Activated T-helper 1 cell treated with anti-CD3 and anti-CD28 coated beads, Interleukin-12 subunit alpha, Interleukin-12 subunit beta, Interleukin-2, Interleukin-4 antibody, amounts not matched to agents 30 ng/mL and 10 ng/mL and 1 ng/mL, durations not matched to agents 14 hours and 24 hours and 36 hours (primary cell): ENCODE measurements at regions of chr1 and their contacts with region 1.

Region 1: GRCh38 chr1:52056163-52056936 is at the start of gene BTF3L4:
- DNase-seq: peak; percentile 92
- H3K4me3 Mint-ChIP-seq: peak within 1 kb of the TSS; percentile 100
- H3K27ac Mint-ChIP-seq: peak within 1 kb of the TSS; percentile 100
- H3K4me1 Mint-ChIP-seq: peaks cover 72% of the 10 kb centered on the region
- H3K27me3 Mint-ChIP-seq: no peaks in the 10 kb centered on the region
- total RNA-seq, gene BTF3L4: 44.9 and 47.5 TPM in 2 replicates

Region 2: GRCh38 chr1:50968158-50968820 is 1088.1 kb before region 1 on chr1:
- intact Hi-C with region 1: loop called (anchors 5 kb)
- DNase-seq: peak; percentile 82
- H3K4me3 Mint-ChIP-seq: peak overlapping the region; percentile 99
- H3K27ac Mint-ChIP-seq: peak overlapping the region; percentile 98
- H3K4me1 Mint-ChIP-seq: peaks cover 39% of the 10 kb centered on the region
- H3K27me3 Mint-ChIP-seq: peaks cover 10% of the 10 kb centered on the region

Region 3: DNA sequence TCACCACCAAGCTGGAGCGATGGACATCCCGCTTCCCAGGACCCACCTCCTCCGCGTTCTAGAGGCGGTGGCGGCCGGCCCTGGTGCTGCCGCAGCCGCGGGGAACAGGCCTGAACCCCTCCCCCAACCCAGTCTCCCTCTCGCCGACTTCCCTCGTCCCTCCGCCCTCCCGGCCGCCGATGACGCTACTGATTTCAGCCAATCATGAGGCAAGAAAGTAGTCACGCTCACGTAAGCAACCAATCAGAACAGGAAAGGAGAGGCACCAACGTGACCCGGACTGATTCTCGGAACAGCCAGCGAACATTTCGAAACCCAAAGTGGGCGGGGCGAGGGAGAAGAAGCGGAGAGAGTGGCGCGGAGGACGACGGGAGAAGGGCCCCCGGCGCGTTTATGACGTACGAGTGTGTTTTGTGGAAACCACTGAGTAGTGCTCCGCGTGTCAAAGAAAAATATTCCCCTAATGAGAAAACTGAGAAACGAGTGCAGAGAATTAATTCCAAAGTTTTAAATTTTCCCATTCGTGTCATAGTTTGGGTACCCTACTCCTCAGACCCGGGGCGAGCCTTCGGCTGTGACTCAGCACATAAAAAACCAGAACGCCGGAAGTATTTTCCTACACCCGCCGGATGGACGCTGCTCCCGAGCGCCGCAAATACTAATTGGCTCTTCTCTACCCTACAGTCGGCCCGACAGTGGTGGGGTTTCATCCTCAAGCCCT is 177.6 kb before region 1 on chr1 and contains the start of gene NRDC:
- intact Hi-C with region 1: loop called (anchors 1 kb)
- DNase-seq: peak; percentile 99
- H3K4me3 Mint-ChIP-seq: no peak within 1 kb of the TSS
- H3K27ac Mint-ChIP-seq: no peak within 1 kb of the TSS
- H3K4me1 Mint-ChIP-seq: no peaks in the 10 kb centered on the region
- H3K27me3 Mint-ChIP-seq: peaks cover 14% of the 10 kb centered on the region
- total RNA-seq, gene NRDC: 177 and 185 TPM in 2 replicates

Region 4: DNA sequence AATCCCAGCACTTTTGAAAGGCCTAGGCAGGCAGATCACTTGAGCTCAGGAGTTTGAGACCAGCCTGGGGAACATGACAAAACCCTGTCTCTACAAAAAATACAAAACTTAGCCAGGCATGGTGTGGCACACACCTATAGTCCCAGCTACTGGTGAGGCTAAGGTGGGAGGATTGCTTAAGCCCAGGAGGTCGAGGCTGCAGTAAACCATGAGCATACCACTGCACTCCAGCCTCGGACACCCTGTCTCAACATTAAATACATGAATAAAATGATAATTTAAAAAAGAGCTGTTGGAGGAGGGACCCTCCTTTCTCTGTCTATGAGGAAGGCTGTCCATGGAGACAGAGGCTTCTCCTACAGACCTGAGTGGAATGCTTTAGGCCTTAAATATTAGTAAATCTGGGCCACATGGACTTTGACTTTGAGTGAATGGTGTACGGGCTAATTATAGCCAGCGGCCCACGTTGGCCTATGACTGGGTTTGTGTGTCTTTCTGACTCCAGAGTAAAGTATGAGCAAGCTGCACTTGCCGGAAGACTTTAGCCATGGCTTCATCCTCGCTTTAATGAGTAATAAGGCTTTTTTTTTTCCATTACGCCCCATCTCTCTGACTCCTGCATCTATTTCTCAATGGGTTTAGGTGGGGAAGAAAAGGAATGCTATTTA is 87.2 kb before region 1 on chr1:
- intact Hi-C with region 1: no loop called
- DNase-seq: no peak
- H3K4me3 Mint-ChIP-seq: no peak overlapping the region
- H3K27ac Mint-ChIP-seq: no peak overlapping the region
- H3K4me1 Mint-ChIP-seq: no peaks in the 10 kb centered on the region
- H3K27me3 Mint-ChIP-seq: peaks cover 12% of the 10 kb centered on the region

Region 5: GRCh38 chr1:52141513-52142219 is 85.3 kb after region 1 on chr1 and contains the start of gene ZFYVE9:
- intact Hi-C with region 1: loop called (anchors 1 kb)
- DNase-seq: peak; percentile 60
- H3K4me3 Mint-ChIP-seq: peak within 1 kb of the TSS; percentile 80
- H3K27ac Mint-ChIP-seq: peak within 1 kb of the TSS; percentile 67
- H3K4me1 Mint-ChIP-seq: peaks cover 34% of the 10 kb centered on the region
- H3K27me3 Mint-ChIP-seq: peaks cover 46% of the 10 kb centered on the region
- total RNA-seq, gene ZFYVE9: 3.2 and 4.1 TPM in 2 replicates

Region 6: DNA sequence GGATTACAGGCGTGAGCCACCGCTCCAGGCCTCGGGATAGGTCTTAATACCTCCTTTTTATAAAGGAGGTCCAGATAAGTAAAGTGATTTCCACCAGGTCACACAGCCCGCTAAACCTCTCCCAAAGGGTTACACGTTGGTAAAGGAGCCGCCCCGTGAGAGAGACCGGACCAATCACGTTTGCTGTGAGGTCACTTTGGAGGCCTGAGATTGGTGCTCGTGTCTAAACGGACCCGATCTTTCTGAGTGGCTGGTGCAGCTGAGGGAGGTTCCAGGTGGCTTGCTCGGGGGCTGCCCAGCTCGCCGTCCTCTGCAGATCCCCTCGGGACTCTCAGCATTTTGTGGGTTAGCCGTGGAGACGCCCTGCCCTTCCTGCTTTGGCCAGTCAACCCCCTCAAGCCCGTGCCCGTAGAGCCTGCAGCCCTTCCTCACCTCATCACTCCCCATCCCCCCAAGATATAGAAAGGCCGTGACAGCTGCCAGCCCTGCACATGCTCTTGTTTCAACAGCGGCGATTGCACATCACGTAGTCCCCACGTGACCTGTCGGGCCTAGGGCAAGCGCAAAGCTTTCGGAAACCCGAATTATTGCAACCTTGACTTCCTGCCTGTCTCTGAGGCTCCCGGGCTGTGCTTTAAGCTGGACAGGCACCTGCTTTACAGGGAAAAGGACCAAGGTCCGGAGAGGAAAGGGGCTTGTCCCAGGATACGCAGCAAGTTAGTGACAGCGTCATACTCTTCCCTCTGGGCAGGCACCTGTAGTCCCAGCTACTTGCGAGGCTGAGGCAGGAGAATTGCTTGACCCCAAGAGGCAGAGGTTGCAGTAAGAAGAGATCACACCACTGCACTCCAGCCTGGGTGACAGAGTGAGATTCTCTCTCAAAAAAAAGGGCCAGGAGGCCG is 646.8 kb after region 1 on chr1:
- intact Hi-C with region 1: loop called (anchors 5 kb)
- DNase-seq: peak; percentile 80
- H3K4me3 Mint-ChIP-seq: peak overlapping the region; percentile 82
- H3K27ac Mint-ChIP-seq: peak overlapping the region; percentile 88
- H3K4me1 Mint-ChIP-seq: peaks cover 32% of the 10 kb centered on the region
- H3K27me3 Mint-ChIP-seq: peaks cover 4% of the 10 kb centered on the region

Region 7: DNA sequence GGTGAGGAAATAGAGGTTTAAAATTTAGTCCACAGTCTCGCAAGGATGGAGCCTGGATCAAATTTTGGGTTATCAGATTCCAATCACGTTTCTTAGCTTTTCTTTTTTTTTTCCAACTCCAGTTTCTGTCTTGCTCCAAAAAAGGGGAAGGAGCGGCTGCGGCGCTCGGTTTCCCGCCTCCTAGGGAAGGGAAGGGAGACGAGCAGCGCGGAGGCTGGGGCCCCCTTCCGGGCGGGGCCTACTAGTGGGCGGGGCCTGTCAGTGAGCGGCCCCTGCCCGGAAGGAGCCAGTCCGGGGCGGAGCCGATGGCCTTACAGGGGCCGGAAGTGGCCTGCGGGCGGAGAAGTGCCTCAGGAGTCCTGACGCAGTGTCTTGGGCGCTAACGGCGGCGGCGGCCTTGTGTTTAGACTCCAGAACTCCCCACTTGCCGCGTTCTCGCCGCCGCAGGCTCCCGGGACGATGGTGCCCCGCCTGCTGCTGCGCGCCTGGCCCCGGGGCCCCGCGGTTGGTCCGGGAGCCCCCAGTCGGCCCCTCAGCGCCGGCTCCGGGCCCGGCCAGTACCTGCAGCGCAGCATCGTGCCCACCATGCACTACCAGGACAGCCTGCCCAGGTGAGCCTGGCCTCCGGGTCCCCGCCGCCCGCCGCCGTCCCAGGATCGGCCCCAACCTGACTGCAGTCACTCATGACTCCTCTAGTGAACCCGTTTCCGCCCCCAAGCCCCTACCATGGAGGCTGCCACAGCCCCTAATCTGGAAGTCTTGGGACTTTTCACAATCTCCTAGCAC is 1140.3 kb after region 1 on chr1 and contains the start of gene CPT2:
- intact Hi-C with region 1: loop called (anchors 2 kb)
- DNase-seq: peak; percentile 92
- H3K4me3 Mint-ChIP-seq: peak within 1 kb of the TSS; percentile 95
- H3K27ac Mint-ChIP-seq: peak within 1 kb of the TSS; percentile 92
- H3K4me1 Mint-ChIP-seq: peaks cover 28% of the 10 kb centered on the region
- H3K27me3 Mint-ChIP-seq: no peaks in the 10 kb centered on the region
- total RNA-seq, gene CPT2: 18.5 and 19.4 TPM in 2 replicates